Activated B cell treated with CpG ODN at 0.5 μM for 24 hours (primary cell): ENCODE measurements at regions of chr9 and their contacts with region 1.

Region 1: GRCh38 chr9:122264360-122265148 is at the starts of genes MRRF and RBM18:
- DNase-seq: peak; percentile 94
- ATAC-seq: peak; percentile 83
- H3K4me3 Mint-ChIP-seq: peak within 1 kb of the TSS; percentile 99
- H3K27ac Mint-ChIP-seq: peak within 1 kb of the TSS; percentile 100
- H3K4me1 Mint-ChIP-seq: peaks cover 42% of the 10 kb centered on the region
- H3K27me3 Mint-ChIP-seq: no peaks in the 10 kb centered on the region
- CTCF ChIP-seq: no peak
- total RNA-seq, gene MRRF: 55.2 and 60.6 TPM in 2 replicates
- total RNA-seq, gene RBM18: 14.2 and 15.3 TPM in 2 replicates

Region 2: DNA sequence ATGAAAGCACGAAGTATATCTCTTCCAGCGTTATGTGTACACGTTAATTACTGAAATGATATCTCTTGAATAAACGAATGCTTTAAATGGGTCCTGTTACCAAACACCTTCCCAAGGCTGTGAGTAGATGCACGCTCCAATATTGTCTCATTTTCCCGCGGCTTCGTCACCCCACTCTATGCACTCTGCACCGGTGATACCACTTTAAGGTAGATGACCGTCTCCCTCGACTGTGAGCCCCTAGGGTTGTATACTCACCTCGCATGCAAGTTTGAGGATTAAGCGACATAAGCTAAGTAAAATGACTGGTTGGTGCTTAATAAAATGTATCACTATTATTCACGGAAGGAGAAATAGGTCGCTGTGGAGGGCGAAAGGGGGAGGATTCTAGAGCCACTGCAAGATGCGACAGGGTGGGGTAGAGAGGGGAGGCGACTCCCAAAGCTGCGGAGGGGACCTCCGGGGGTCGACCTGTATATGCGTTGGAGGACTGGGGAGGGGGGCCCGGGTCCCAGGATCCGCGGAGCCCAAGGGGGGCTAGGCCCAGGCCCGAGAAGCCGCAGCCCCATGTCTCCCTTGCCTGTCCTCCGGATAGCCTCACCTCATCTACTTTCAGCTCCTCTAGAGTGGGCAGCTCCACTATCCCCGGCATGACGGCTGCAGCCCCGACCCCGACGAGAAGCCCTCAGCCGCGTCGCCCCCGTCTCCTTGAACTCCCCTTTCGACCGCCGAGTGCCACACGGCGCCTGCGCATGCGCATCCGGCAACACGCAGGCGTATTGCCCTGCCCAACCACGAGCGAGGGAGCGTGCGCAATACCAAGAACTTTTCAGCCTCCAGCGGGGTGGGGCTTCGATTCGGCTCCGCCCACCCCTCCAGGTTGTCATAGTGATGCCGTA is 105.3 kb before region 1 on chr9 and contains the starts of genes MORN5 and NDUFA8:
- CTCF ChIA-PET with region 1: no interaction called
- POLR2A ChIA-PET with region 1: interaction called, 8 read pairs
- intact Hi-C with region 1: loop called (anchors 2 kb)
- DNase-seq: peak; percentile 93
- ATAC-seq: peak; percentile 96
- H3K4me3 Mint-ChIP-seq: peak within 1 kb of the TSS; percentile 98
- H3K27ac Mint-ChIP-seq: peak within 1 kb of the TSS; percentile 94
- H3K4me1 Mint-ChIP-seq: peaks cover 35% of the 10 kb centered on the region
- H3K27me3 Mint-ChIP-seq: peaks cover 24% of the 10 kb centered on the region
- CTCF ChIP-seq: no peak
- total RNA-seq, gene MORN5: not detected in 2 replicates
- total RNA-seq, gene NDUFA8: 21.1 and 21.2 TPM in 2 replicates

Region 3: GRCh38 chr9:122286764-122287163 is 22.2 kb after region 1 on chr9:
- CTCF ChIA-PET with region 1: interaction called, 4 read pairs
- POLR2A ChIA-PET with region 1: interaction called, 7 read pairs
- intact Hi-C with region 1: loop called (anchors 1 kb)
- DNase-seq: no peak
- ATAC-seq: peak; percentile 84
- H3K4me3 Mint-ChIP-seq: no peak overlapping the region
- H3K27ac Mint-ChIP-seq: peak overlapping the region; percentile 43
- H3K4me1 Mint-ChIP-seq: peaks cover 41% of the 10 kb centered on the region
- H3K27me3 Mint-ChIP-seq: no peaks in the 10 kb centered on the region
- CTCF ChIP-seq: no peak

Region 4: GRCh38 chr9:122370869-122371755 is 106.6 kb after region 1 on chr9 and contains the start of gene PTGS1:
- CTCF ChIA-PET with region 1: no interaction called
- POLR2A ChIA-PET with region 1: interaction called, 4 read pairs
- intact Hi-C with region 1: loop called (anchors 10 kb)
- DNase-seq: peak; percentile 45
- ATAC-seq: peak; percentile 81
- H3K4me3 Mint-ChIP-seq: peak within 1 kb of the TSS; percentile 84
- H3K27ac Mint-ChIP-seq: peak within 1 kb of the TSS; percentile 78
- H3K4me1 Mint-ChIP-seq: peaks cover 36% of the 10 kb centered on the region
- H3K27me3 Mint-ChIP-seq: no peaks in the 10 kb centered on the region
- CTCF ChIP-seq: no peak
- total RNA-seq, gene PTGS1: 8.9 and 9.4 TPM in 2 replicates

Region 5: DNA sequence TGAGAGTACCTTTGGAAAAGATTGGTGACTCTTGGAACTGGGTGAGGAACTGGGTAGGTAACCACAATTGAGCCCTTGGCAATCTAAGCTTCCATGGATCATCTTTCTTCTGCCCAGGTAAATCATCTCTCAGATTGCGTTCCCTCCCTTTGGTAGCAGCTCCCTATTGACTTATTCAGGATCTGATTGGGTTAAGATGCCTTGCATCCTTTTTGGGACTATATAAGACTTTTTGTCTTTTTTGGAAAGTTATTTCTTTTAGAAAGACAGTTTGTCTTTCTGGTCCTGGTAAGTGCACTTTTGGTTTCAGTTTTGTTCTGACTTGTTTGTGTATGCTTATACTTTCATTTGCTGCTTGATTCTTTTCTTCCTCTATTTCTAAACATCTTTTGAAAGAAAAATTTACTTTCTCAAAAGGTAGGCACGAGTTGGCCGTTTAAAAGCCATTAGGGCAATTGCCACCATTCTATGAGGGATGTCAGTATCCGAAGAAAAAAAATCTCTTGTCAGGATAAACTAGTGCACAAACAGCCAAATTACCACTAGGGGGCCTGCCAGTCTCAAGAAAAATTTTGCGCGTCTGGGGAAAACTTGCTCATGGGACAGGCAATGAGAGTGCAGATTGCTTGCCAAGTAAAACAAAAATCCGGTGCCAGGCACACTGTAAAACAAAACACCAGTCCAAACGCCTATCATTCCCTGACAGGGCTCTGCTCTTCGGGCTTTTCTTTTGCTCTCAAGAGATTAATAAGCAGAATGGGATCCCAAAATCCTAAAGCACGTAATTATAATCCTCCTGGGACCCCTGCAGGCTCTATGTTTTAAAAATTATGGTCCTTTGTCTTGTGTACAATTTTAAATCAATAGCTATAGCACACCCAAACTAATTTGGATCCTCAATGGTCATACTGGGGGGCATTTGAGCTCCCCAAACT is 200.3 kb after region 1 on chr9:
- CTCF ChIA-PET with region 1: no interaction called
- POLR2A ChIA-PET with region 1: no interaction called
- intact Hi-C with region 1: loop called (anchors 5 kb)
- DNase-seq: peak; percentile 19
- ATAC-seq: peak; percentile 81
- H3K4me3 Mint-ChIP-seq: peak overlapping the region; percentile 84
- H3K27ac Mint-ChIP-seq: peak overlapping the region; percentile 70
- H3K4me1 Mint-ChIP-seq: peaks cover 14% of the 10 kb centered on the region
- H3K27me3 Mint-ChIP-seq: peaks cover 32% of the 10 kb centered on the region
- CTCF ChIP-seq: peak; percentile 28